Mucosa of descending colon (tissue), 3 donors: ENCODE measurements at regions of chr13 and their contacts with region 1.

Region 1: GRCh38 chr13:26498656-26499591 is 58.6 kb upstream of the WASF3 start:
- DNase-seq: no peak
- ATAC-seq: no peak
- H3K4me3 ChIP-seq: no peak overlapping the region
- H3K4me1 ChIP-seq: no peaks in the 10 kb centered on the region
- CTCF ChIP-seq: no peak

Region 2: GRCh38 chr13:26186118-26186870 is 312.6 kb before region 1 on chr13:
- intact Hi-C with region 1: loop called (anchors 5 to 10 kb)
- DNase-seq: peak; percentile 94 to 95 (median 95)
- ATAC-seq: peak; percentile 100
- H3K4me3 ChIP-seq: peak overlapping the region; percentile 43
- H3K4me1 ChIP-seq: no peaks in the 10 kb centered on the region
- CTCF ChIP-seq: peak; percentile 45

Region 3: GRCh38 chr13:26382366-26382765 is 116.6 kb before region 1 on chr13:
- intact Hi-C with region 1: loop called in 1 of 2 experiments (anchors 10 kb)
- DNase-seq: no peak
- ATAC-seq: no peak
- H3K4me3 ChIP-seq: no peak overlapping the region
- H3K4me1 ChIP-seq: no peaks in the 10 kb centered on the region
- CTCF ChIP-seq: no peak

Region 4: DNA sequence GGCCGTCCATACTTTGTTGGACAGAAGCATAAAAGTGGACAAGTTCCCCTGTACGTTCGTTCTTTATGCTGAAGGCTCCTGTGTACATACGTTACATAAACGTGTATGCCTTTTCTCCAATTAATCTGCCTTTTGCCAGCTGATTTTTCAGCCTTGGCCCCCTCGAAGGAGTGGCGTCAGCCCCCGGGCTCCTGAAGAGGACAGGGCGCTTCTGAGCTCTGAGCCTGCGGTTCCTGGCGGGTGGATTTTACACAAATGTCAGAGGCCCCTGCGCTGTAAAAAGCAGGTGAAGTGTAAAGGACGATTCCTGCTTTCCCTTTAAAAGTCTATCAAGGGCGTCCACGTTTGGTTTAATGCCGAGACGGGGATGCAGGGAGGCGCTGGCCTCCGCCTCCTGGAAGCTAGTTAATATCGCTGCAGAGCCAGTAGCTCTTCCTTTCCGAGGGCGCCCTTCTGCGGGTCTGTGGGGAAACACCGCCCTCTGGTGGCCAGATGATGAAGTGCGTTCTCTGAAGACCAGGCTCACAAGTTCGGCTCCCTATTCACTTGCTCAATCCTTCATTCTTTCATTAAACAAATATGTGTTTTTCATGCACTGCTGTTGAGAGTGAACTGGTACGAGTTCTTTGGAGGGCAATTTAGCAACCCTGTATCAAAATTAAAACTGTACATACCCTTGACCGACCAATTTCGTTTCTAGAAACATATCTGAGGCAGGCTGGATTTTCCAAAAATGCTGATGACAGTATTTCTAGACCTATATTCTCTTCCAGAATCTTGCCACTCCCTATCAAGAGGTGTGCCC is 199.7 kb after region 1 on chr13:
- intact Hi-C with region 1: loop called in 1 of 2 experiments (anchors 10 kb)
- DNase-seq: peak; percentile 71 to 88 (median 86)
- ATAC-seq: peak; percentile 96
- H3K4me3 ChIP-seq: no peak overlapping the region
- H3K4me1 ChIP-seq: no peaks in the 10 kb centered on the region
- CTCF ChIP-seq: peak; percentile 94